ENCODE measurements at regions of chr9 and their contacts with region 1.

Region 1: DNA sequence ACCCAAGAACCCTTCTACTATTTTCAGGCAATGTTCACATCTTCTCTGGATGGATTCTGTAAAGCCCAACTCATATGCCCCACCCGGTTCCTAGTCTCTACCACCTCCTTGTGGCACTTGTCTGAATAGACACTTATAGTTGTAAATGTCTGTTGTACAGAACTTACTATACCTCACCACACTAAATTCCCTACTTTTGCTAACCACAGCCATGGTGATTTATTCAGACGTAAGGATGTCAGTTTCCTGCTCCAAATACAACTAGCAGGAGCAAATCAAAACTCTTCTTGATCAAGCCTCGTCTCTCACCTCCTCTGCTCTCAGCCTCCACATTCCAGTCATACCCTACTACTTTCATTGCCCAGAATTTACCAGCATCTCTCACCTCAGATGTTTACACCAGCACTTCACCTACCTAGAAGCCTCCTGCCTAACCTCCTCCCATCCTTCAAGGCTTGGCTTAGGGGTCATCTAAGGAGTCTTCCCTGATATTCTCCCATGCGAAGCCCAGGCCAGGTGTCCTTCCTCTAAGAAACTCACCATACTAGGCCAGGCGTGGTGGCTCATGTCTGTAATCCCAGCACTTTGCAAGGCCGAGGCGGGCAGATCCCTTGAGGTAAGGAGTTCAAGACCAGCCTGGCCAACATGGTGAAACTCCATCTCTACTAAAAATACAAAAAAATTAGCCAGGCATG is 75.5 kb downstream of the MAPKAP1 start:
- DNase-seq: peak; percentile 38
- H3K4me3 Mint-ChIP-seq: no peak overlapping the region
- H3K27ac Mint-ChIP-seq: peak overlapping the region; percentile 28
- H3K4me1 Mint-ChIP-seq: peaks cover 45% of the 10 kb centered on the region
- H3K27me3 Mint-ChIP-seq: no peaks in the 10 kb centered on the region

Region 2: GRCh38 chr9:125646621-125647100 is 15.1 kb after region 1 on chr9:
- CTCF ChIA-PET with region 1: interaction called, 12 read pairs
- DNase-seq: no peak
- H3K4me3 Mint-ChIP-seq: peak overlapping the region; percentile 62
- H3K27ac Mint-ChIP-seq: peak overlapping the region; percentile 84
- H3K4me1 Mint-ChIP-seq: peaks cover 64% of the 10 kb centered on the region
- H3K27me3 Mint-ChIP-seq: no peaks in the 10 kb centered on the region